RWPE1 (cell line): ENCODE measurements at regions of chr20 and their contacts with region 1.

Region 1: DNA sequence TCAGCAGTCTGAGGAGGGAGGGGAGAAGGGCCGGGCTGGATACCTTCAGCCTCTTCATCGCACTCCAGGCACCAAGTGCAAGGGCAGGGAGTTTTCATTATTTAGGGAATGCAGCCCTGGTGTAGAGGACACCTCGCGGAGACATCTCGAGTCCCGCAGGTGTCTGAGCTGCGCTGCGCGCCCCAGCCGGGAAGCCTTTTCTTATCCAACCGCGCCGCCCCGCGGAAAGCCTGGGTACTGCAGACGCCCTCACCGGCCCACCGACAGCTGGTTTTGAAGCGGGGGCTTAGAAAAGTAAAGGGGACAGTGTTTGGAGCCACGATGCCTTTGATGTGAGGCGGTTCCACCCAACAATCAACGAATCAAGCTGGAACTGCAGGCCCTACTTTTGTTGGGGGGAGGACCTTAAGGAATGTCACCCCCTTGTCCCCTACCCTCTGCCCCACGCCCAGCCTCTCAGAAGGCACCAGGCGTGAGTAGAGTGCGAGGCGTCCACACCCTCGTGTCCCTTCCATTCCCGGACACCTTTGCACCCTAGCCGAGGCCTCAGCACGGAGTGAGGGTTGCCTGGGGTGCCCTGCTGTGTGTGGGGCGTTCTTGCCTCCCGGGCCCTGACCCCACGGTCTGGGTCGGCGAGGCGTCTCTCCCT is 8.6 kb downstream of the NKX2-2 start:
- DNase-seq: peak; percentile 85
- H3K27ac ChIP-seq: no peak overlapping the region
- CTCF ChIP-seq: peak; percentile 98

Region 2: GRCh38 chr20:20837574-20838021 is 667.7 kb before region 1 on chr20:
- CTCF ChIA-PET with region 1: interaction called, 21 read pairs
- POLR2A ChIA-PET with region 1: interaction called, 3 read pairs
- DNase-seq: peak; percentile 54
- H3K27ac ChIP-seq: no peak overlapping the region
- CTCF ChIP-seq: peak; percentile 83

Region 3: GRCh38 chr20:20860078-20860806 is 645.0 kb before region 1 on chr20:
- CTCF ChIA-PET with region 1: interaction called, 27 read pairs
- POLR2A ChIA-PET with region 1: no interaction called
- DNase-seq: peak; percentile 80
- H3K27ac ChIP-seq: no peak overlapping the region
- CTCF ChIP-seq: peak; percentile 95

Region 4: DNA sequence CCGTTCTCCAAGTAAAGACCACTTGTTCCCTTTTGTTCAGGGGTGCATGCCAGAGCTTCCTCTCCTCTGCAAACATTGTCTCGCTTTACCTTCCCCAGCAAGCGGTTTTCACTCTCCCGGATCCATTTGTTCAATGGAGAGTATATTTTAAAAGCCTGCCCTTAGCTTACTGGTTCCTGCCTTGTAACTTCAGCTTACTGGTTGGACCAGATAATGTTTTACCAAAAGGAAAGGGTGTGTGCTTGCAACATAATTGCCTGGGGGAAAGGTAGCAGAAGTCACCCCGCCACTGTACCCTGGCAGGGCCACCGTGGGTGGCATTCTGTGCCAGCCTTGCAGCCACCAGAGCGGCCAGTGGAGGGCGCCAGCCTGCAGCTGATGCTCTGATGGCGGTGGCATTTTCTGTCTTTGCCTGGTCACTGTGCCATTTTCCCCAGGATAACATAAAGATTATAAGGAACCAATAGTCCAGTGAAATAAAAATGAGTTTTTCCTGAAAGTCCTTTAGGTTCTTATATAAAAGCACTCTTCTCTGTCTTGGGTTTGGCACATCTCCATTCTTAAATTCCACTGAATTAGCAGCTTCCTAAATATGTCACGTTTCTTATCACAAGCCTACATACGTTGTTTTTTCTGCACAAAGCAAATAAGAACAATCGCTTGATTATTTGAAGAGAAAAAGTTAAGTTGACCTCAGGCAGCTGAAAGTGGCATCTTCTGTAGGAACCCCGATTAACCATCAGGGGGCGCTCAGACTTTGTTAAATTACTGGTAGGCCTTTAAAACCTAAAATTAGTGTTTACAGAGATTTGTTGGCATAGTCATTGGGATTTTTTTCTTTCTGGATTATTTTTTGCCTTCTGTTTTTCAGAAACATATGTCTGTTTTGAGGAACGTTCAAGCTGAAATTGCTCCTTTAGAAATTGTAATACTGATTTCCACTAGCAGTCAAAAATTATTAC is 269.5 kb before region 1 on chr20:
- CTCF ChIA-PET with region 1: interaction called, 71 read pairs
- POLR2A ChIA-PET with region 1: no interaction called
- DNase-seq: peak; percentile 47
- H3K27ac ChIP-seq: no peak overlapping the region
- CTCF ChIP-seq: peak; percentile 97

Region 5: GRCh38 chr20:21615617-21616080 is 110.4 kb after region 1 on chr20:
- CTCF ChIA-PET with region 1: interaction called, 11 read pairs
- POLR2A ChIA-PET with region 1: no interaction called
- DNase-seq: peak; percentile 73
- H3K27ac ChIP-seq: no peak overlapping the region
- CTCF ChIP-seq: peak; percentile 91

Region 6: DNA sequence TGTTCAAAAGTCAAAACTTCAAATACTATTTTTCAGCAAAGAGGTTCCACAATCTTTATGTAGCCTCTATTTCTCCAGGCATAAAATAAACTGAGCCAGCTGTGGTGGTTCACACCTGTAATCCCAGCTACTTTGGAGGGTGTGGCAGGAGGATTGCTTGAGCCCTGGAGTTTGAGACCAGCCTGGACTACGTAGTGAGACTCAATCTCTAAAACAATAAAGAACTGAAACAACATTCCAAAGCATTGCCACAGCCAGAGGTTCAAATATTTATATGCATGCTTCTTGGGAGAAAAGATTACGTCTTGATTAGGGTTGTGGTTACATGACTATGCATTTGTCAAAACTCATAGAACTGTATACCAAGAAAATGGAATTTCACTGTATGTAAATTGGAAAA is 172.4 kb after region 1 on chr20:
- CTCF ChIA-PET with region 1: no interaction called
- POLR2A ChIA-PET with region 1: no interaction called
- DNase-seq: no peak
- H3K27ac ChIP-seq: no peak overlapping the region
- CTCF ChIP-seq: no peak